AG04449 (cell line): ENCODE measurements at regions of chr1 and their contacts with region 1.

Region 1: DNA sequence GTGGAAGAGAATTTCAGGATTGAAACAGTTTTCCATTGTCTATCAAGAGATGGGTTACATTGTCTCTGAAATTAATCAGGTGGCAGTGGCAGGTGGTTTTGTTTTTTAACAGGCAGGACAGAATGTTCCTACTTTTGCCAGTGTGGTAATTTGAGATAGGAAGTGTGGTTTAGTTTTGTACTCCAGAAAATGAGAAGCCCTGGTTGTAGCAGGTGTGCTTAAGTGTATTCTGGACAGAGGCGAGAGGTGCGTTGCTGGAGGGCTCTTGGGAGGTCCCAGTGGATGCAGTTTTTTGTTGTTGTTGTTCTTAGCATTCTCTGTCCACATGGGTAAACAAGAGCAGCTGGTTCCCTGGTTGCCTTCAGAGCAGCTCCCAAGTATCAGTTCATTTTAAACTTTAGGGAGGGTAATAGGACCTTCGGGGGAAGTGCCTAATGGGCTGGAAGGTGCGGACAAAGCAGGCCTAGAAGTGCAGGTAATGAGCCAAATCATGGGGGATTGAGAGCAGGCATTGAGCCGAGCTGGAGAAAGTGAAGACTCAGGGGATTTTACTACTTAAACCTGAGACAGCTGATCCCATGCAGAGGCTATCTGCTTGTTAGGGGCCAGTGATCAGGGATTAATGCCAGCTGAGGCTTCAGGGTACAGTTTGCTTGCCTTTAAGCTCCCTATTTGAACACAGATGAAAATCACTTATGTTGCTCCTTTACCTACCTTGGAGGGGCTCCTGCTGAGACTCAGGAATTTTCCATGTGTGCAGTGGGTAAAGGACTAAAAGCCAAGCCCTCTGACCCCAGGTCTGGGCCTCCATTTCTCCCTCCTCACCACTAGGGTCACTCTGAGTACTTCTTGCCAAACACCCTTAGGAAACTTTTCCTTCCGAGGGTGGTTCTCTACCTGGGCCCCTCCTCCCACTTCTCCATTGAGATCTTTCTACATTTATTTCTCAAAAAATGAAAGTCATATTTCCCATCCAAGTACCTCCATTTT is 6.1 kb downstream of the PFKFB2 start:
- DNase-seq: no peak
- H3K4me3 ChIP-seq: no peak overlapping the region
- CTCF ChIP-seq: no peak

Region 2: GRCh38 chr1:207077470-207078377 is 18.6 kb after region 1 on chr1:
- CTCF ChIA-PET with region 1: interaction called, 14 read pairs
- POLR2A ChIA-PET with region 1: no interaction called
- DNase-seq: peak; percentile 23
- H3K4me3 ChIP-seq: no peak overlapping the region
- CTCF ChIP-seq: peak; percentile 86